Ovary (tissue), 10 donors: ENCODE measurements at regions of chr6 and their contacts with region 1.

Region 1: GRCh38 chr6:31094389-31094881 is 17.9 kb downstream of the C6orf15 start:
- DNase-seq: no peak
- H3K4me3 ChIP-seq: no peak overlapping the region
- H3K27ac ChIP-seq: no peak overlapping the region
- H3K4me1 ChIP-seq: no peaks in the 10 kb centered on the region
- H3K27me3 ChIP-seq: no peaks in the 10 kb centered on the region
- CTCF ChIP-seq: no peak
- EP300 ChIP-seq: no peak
- POLR2A ChIP-seq: no peak

Region 2: DNA sequence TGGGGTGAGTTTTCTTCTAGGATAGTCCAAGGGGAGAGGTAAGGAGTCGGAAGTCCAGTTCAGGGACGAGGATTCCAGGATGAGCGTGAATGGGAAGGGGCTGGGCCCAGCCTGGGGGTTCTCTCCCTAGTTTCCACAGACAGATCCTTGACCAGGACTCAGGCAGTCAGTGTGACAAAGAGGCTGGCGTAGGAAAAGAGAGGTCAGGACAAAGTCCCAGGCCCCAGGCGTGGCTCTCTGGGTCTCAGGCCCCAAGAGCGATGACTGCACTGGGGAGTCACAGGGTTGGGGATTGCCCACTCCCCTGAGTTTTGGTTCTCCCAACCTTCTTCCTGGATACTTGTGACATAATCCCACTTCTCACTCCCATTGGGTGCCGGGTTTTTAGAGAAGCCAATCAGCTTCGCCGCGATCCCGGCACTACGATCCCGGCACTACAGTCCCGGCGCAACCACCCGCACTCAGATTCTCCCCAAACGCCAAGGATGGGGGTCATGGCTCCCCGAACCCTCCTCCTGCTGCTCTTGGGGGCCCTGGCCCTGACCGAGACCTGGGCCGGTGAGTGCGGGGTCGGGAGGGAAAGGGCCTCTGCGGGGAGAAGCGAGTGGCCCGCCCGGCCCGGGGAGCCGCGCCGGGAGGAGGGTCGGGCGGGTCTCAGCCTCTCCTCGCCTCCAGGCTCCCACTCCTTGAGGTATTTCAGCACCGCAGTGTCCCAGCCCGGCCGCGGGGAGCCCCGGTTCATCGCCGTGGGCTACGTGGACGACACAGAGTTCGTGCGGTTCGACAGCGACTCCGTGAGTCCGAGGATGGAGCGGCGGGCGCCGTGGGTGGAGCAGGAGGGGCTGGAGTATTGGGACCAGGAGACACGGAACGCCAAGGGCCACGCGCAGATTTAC is 835.0 kb before region 1 on chr6:
- intact Hi-C with region 1: no loop called
- DNase-seq: peak; percentile 64 to 76 (median 70)
- H3K4me3 ChIP-seq: peak overlapping the region; percentile 79
- H3K27ac ChIP-seq: peak overlapping the region; percentile 21 to 79
- H3K4me1 ChIP-seq: no peaks in the 10 kb centered on the region
- H3K27me3 ChIP-seq: no peaks in the 10 kb centered on the region
- CTCF ChIP-seq: peak in 1 of 3 donors; percentile 28
- EP300 ChIP-seq: no peak
- POLR2A ChIP-seq: no peak

Region 3: GRCh38 chr6:30926644-30927043 is 167.8 kb before region 1 on chr6:
- intact Hi-C with region 1: no loop called
- DNase-seq: no peak
- H3K4me3 ChIP-seq: no peak overlapping the region
- H3K27ac ChIP-seq: no peak overlapping the region
- H3K4me1 ChIP-seq: no peaks in the 10 kb centered on the region
- H3K27me3 ChIP-seq: no peaks in the 10 kb centered on the region
- CTCF ChIP-seq: no peak
- EP300 ChIP-seq: no peak
- POLR2A ChIP-seq: no peak

Region 4: GRCh38 chr6:31058128-31058894 is 36.1 kb before region 1 on chr6:
- intact Hi-C with region 1: no loop called
- DNase-seq: no peak
- H3K4me3 ChIP-seq: no peak overlapping the region
- H3K27ac ChIP-seq: no peak overlapping the region
- H3K4me1 ChIP-seq: no peaks in the 10 kb centered on the region
- H3K27me3 ChIP-seq: no peaks in the 10 kb centered on the region
- CTCF ChIP-seq: peak in 1 of 3 donors; percentile 12
- EP300 ChIP-seq: no peak
- POLR2A ChIP-seq: no peak

Region 5: GRCh38 chr6:31139599-31139998 is 45.2 kb after region 1 on chr6:
- intact Hi-C with region 1: no loop called
- DNase-seq: no peak
- H3K4me3 ChIP-seq: no peak overlapping the region
- H3K27ac ChIP-seq: no peak overlapping the region
- H3K4me1 ChIP-seq: no peaks in the 10 kb centered on the region
- H3K27me3 ChIP-seq: no peaks in the 10 kb centered on the region
- CTCF ChIP-seq: no peak
- EP300 ChIP-seq: no peak
- POLR2A ChIP-seq: no peak

Region 6: DNA sequence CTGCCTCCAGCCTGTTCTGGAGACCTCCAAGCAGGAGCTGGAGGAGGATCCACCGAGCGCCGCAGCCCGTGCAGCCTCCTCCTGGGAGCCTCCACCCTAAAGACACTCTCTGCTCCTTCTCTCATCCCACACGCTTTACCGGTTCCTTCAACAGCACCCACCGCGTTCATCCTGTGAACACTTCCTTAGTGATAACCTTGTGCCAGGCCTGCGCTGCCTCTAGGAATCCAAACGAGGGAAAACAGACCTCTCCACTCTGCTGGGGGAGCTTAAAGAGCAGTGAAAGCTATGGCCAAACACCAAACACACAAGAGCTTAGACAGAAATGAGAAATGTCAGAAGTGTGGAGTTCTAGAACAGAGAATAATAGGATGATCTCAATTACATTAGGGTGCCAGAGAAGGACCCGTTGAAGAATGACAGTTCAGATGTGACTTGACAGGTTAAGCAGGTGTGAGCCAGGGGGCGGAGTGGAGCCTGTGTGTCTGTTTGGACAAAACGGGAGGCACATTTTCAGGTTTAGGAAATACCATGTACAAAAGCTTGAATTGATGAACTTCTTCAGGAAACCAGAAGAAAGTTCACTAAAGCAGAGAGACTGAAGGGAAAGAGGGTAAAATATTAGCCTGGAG is 1464.1 kb after region 1 on chr6:
- intact Hi-C with region 1: loop called in 1 of 4 experiments (anchors 10 kb)
- DNase-seq: no peak
- H3K4me3 ChIP-seq: no peak overlapping the region
- H3K27ac ChIP-seq: no peak overlapping the region
- H3K4me1 ChIP-seq: no peaks in the 10 kb centered on the region
- H3K27me3 ChIP-seq: no peaks in the 10 kb centered on the region
- CTCF ChIP-seq: no peak
- EP300 ChIP-seq: no peak
- POLR2A ChIP-seq: no peak